SK-N-SH (cell line): ENCODE measurements at regions of chr17 and their contacts with region 1.

Region 1: DNA sequence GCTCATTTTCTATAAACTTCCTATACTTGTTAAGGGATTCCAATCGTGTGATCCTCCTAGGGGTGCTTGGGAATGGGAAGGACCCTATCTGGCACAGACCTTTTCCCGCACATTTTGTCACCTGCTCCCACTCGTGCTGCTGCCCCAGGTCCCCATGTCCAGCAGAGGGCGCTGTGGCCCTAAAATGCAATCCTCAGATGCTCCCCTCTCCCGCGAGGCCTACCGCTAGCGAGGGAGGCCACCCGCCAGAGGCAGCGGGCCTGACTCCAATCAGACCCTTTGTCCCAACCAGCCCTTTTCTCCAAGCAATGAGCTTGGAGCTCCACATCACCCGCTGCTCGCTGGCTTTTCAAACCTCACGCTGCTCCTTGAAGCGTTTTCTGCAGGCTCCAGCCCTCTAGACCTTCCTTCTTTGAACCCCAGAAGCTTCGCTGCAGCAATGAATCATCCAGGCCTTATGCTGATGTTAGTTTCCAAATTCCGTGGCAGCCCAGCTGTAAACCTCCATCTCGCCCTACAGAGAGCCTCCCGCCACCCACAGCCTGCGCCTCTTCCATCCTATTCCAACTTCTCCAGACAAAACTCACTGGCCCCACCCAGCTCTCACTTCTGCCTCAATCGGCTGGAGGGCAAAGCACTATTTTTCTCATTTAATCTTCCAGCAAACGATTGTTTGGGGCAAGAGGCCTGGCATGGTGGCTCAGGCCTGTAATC is 23.6 kb upstream of the FZD2 start:
- DNase-seq: peak; percentile 94
- H3K4me3 ChIP-seq: no peak overlapping the region; a peak in 1 of 4 replicates
- H3K27ac ChIP-seq: 0 out of 4 replicates have a peak overlapping the region, but pooled peaks of 1 of the 2 experiments have one; percentile 4
- H3K4me1 ChIP-seq: peaks cover 6 to 7% of the 10 kb centered on the region in 2 experiments; a peak in 1 of 4 replicates
- H3K27me3 ChIP-seq: no peaks in the 10 kb centered on the region
- CTCF ChIP-seq: peak; percentile 96
- EP300 ChIP-seq: no peak
- RAD21 ChIP-seq: peak; percentile 96

Region 2: DNA sequence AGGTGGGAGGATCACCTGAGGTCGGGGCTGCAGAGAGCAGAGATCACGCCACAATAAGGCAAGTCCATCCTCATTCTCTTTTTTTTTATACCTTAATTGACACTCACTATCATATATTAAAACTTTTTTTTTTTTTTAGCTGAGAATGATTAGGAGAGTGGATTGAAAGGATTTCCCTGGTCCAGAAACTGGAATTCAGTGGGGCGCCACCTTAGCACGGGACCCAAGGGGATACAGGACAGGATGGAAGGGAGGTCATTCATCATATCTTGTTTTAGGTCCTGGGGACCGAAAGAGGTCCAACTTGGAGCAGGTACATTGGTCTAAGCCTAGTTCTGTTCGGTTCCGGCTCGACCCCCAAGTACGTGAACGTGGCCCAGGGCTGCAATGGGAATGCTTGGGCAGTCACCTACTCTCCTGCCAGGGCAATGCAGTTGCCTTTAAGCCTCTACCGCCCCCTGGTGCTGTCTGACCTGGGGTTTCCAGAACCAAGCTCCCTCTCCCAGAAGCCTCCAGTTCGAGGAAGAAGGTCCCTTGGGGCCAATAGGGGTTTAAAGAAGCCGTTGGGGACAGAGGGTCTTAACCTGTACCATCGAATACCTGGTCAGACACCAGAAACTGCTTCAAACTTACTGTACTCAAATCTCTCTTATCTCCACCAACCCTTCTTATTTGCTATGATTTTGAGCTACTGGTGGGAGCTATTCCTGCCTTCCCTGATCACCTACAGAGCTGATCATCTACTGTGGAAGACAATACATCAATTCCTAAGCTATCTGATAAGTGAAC is 10.6 kb before region 1 on chr17:
- CTCF ChIA-PET with region 1: interaction called, 18 read pairs
- POLR2A ChIA-PET with region 1: no interaction called
- DNase-seq: peak; percentile 48
- H3K4me3 ChIP-seq: no peak overlapping the region
- H3K27ac ChIP-seq: no peak overlapping the region
- H3K4me1 ChIP-seq: no peaks in the 10 kb centered on the region
- H3K27me3 ChIP-seq: no peaks in the 10 kb centered on the region
- CTCF ChIP-seq: peak; percentile 54
- EP300 ChIP-seq: no peak
- RAD21 ChIP-seq: peak; percentile 58

Region 3: DNA sequence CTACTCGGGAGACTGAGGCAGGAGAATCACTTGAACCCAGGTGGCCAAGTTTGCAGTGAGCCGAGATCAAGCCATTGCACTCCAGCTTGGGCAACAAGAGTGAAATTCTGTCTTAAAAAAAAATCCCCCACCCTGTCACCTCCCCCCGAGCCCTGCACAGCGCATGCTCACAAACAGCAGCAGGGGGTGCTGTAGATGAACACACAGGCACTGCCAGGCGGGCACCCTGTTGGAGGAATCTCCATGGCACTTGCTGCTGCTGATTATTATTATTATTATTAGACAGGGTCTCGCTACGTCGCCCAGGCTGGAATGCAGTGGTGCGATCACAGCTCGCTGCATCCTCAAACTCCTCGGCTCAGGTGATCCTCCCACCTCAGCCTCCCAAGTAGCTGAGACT is 48.2 kb after region 1 on chr17:
- CTCF ChIA-PET with region 1: interaction called, 14 read pairs
- POLR2A ChIA-PET with region 1: no interaction called
- DNase-seq: peak; percentile 68
- H3K4me3 ChIP-seq: no peak overlapping the region
- H3K27ac ChIP-seq: no peak overlapping the region
- H3K4me1 ChIP-seq: peaks cover 0 to 3% of the 10 kb centered on the region in 2 experiments; a peak in 1 of 4 replicates
- H3K27me3 ChIP-seq: no peaks in the 10 kb centered on the region
- CTCF ChIP-seq: peak; percentile 54
- EP300 ChIP-seq: no peak
- RAD21 ChIP-seq: peak; percentile 68

Region 4: GRCh38 chr17:44628243-44629188 is 94.8 kb after region 1 on chr17:
- CTCF ChIA-PET with region 1: interaction called, 56 read pairs
- POLR2A ChIA-PET with region 1: no interaction called
- DNase-seq: no peak
- H3K4me3 ChIP-seq: no peak overlapping the region
- H3K27ac ChIP-seq: no peak overlapping the region
- H3K4me1 ChIP-seq: peaks cover 0 to 6% of the 10 kb centered on the region in 2 experiments; a peak in 1 of 4 replicates
- H3K27me3 ChIP-seq: no peaks in the 10 kb centered on the region
- CTCF ChIP-seq: no peak
- EP300 ChIP-seq: no peak
- RAD21 ChIP-seq: no peak

Region 5: GRCh38 chr17:44655983-44656710 is 122.5 kb after region 1 on chr17 and contains the start of gene MEIOC:
- CTCF ChIA-PET with region 1: interaction called, 11 read pairs
- POLR2A ChIA-PET with region 1: no interaction called
- DNase-seq: peak; percentile 97
- H3K4me3 ChIP-seq: peak within 1 kb of the TSS; percentile 36 to 48; a peak in 3 of 4 replicates
- H3K27ac ChIP-seq: no peak within 1 kb of the TSS
- H3K4me1 ChIP-seq: peaks cover 0 to 6% of the 10 kb centered on the region in 2 experiments; a peak in 1 of 4 replicates
- H3K27me3 ChIP-seq: no peaks in the 10 kb centered on the region
- CTCF ChIP-seq: peak; percentile 47
- EP300 ChIP-seq: no peak
- RAD21 ChIP-seq: no peak
- polyA plus RNA-seq, gene MEIOC: 1.2 and 1.3 TPM in 2 replicates

Region 6: GRCh38 chr17:44672479-44673093 is 138.9 kb after region 1 on chr17:
- CTCF ChIA-PET with region 1: interaction called, 24 read pairs
- POLR2A ChIA-PET with region 1: no interaction called
- DNase-seq: peak; percentile 34
- H3K4me3 ChIP-seq: no peak overlapping the region
- H3K27ac ChIP-seq: no peak overlapping the region
- H3K4me1 ChIP-seq: 0 out of 4 replicates have a peak, but pooled peaks cover 0 to 3% of the 10 kb centered on the region in 2 experiments
- H3K27me3 ChIP-seq: no peaks in the 10 kb centered on the region
- CTCF ChIP-seq: peak; percentile 76
- EP300 ChIP-seq: no peak
- RAD21 ChIP-seq: peak; percentile 57

Region 7: DNA sequence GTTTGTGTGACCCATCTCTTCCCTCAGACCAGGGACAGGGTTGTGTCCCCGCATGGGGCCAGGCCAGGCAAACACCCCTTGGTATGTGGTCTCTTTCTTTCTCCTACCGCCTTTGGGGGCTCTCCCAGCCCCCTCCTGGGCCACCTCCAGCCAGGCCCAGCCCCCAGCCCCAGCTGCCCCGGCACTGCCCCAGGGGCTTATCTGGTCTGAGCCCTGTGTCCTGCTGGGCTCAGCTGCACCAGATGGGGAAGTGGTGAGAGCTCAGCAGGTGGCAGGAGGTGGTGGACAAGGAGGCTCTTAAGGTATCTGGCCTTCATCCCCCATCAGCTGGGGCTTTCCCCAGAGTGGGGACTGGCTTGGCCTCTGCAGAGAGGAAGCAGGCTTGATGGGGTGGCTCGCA is 233.8 kb after region 1 on chr17:
- CTCF ChIA-PET with region 1: no interaction called
- POLR2A ChIA-PET with region 1: no interaction called
- DNase-seq: no peak
- H3K4me3 ChIP-seq: no peak overlapping the region
- H3K27ac ChIP-seq: no peak overlapping the region
- H3K4me1 ChIP-seq: peaks cover 0 to 15% of the 10 kb centered on the region in 2 experiments; a peak in 1 of 4 replicates
- H3K27me3 ChIP-seq: no peaks in the 10 kb centered on the region
- CTCF ChIP-seq: no peak
- EP300 ChIP-seq: no peak
- RAD21 ChIP-seq: no peak